ENCODE measurements at regions of chr11 and their contacts with region 1.

Region 1: DNA sequence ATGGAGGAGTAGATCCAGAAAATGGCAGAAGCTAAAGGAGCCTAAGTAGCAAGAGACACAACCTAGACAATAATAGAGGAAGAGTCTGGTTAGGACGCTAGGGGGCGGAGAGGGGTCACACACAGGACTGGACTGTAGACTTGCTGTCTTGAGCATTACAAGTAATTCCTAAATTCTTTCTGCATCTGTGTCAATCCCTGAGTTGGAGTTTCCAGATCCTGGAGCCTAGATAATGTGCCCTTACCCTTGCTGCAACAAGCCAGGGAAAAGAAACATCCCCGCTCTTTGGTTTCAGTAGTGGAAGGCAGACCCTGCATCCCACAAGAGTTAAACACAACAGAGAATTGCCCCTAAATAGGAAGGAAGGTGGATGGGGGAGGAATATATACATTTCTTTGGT is 14.9 kb upstream of the CCDC73 start:
- DNase-seq: peak; percentile 18
- H3K4me3 ChIP-seq: no peak overlapping the region
- H3K27me3 ChIP-seq: no peaks in the 10 kb centered on the region
- CTCF ChIP-seq: peak; percentile 89

Region 2: GRCh38 chr11:32874144-32874543 is 64.8 kb after region 1 on chr11:
- CTCF ChIA-PET with region 1: no interaction called
- POLR2A ChIA-PET with region 1: interaction called, 11 read pairs
- DNase-seq: no peak
- H3K4me3 ChIP-seq: no peak overlapping the region
- H3K27me3 ChIP-seq: peaks cover 2% of the 10 kb centered on the region; the same call in 1 of the 2 replicates
- CTCF ChIP-seq: no peak

Measured in BJ (cell line).